ENCODE measurements at regions of chr11 and their contacts with region 1.

Region 1: DNA sequence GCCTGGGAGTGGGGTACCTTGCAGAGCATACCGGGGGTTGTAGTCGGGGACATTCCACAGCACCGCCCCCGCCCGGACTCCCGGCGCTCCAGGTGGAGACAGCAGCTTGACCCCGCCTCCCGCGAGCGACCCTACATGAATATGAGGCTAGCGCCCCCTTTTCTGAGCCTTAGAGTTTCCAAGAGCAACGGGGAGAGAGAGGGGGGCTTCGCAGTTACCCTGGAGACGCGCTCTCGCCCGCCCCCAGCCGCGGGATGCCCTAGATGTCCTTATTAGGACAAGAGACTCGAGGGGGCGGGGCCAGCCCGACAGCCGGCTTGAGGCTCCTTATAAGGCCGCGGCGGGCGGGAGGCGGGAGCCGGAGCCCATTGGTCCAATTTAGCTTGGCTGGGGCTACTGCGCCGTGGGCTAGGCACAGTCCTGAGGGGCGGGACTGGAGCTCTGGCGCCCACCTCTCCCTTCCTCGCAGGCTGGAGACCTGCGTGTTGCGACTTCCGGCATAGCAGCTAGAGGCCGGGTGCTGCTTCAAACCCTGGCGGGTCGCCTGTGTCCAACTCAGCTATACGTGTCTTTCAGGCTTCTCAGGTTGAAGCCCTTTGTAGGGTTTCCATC is 927 bp upstream of the MUS81 start:
- DNase-seq: peak; percentile 97
- H3K4me3 Mint-ChIP-seq: peak overlapping the region; percentile 96
- H3K27ac Mint-ChIP-seq: peak overlapping the region; percentile 99
- H3K4me1 Mint-ChIP-seq: peaks cover 49% of the 10 kb centered on the region
- H3K27me3 Mint-ChIP-seq: no peaks in the 10 kb centered on the region

Region 2: DNA sequence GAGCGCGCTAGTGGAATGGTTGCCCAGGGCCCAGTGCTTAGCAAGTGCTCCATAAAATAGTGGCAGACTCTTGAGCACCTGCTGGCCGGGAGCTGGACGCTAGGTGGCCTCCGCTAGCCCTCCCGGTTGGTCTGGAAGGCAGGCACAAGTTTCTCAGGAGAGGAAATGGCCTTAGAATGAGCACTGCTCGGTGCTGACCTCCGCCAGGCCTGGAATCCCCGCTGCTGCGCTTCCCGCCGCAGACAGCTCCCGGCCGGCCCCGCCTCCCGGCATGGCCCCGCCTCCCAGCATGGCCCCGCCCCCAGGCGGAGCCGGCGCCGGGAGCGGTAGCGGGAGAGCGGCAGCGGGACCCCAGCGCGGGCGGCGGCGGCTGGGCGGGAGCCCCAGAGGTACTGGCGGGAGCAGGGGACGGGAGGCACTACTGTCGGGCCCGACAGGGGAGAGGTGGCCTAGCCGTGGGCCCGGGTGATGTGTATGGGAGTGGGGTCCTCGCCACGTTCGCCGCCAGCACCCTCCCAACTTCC is 221.4 kb before region 1 on chr11 and contains the start of gene SIPA1:
- intact Hi-C with region 1: loop called (anchors 2 kb)
- DNase-seq: peak; percentile 74
- H3K4me3 Mint-ChIP-seq: peak within 1 kb of the TSS; percentile 82
- H3K27ac Mint-ChIP-seq: peak within 1 kb of the TSS; percentile 83
- H3K4me1 Mint-ChIP-seq: peaks cover 40% of the 10 kb centered on the region
- H3K27me3 Mint-ChIP-seq: no peaks in the 10 kb centered on the region
- total RNA-seq, gene SIPA1: 117 and 130 TPM in 2 replicates

Region 3: DNA sequence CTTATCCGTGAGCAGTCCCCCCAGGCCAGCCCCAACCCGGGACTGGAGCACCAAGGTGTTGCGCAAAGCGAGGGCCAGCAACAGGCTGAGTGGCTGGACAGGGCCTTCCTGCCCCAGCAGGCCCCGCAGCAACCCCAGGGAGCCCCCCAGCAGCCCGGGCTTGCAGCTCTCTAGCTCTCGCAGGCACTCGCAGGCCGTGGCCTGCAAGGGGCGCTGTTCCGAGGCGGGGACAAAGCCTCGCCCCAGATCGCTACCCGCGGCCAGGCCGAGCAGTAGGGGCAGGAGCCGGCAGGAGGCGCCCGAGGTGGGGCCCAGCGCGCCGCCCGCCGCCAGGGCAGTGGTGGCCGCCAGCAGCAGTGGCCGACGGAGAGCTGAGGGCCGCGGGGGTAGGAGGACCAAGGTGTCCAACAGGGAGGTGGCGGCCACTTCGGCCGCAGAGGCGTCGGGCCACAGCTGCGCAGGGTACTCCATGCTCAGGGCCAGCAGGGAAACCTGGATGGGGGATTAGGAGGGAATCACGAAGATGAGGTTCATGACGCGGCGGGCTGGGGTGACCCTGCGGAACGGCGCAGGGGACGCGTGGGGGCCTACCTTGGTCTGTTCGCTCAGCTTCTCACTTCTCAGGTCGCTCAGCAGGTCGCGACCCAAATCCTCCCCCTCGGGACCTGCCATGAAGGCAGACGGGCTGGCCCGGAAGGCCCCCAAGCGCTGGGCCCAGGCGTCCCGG is 79.3 kb before region 1 on chr11:
- intact Hi-C with region 1: loop called (anchors 1 kb)
- DNase-seq: peak; percentile 78
- H3K4me3 Mint-ChIP-seq: peak overlapping the region; percentile 88
- H3K27ac Mint-ChIP-seq: peak overlapping the region; percentile 91
- H3K4me1 Mint-ChIP-seq: peaks cover 27% of the 10 kb centered on the region
- H3K27me3 Mint-ChIP-seq: peaks cover 20% of the 10 kb centered on the region

Region 4: GRCh38 chr11:65791691-65792213 is 67.6 kb before region 1 on chr11:
- intact Hi-C with region 1: no loop called
- DNase-seq: peak; percentile 56
- H3K4me3 Mint-ChIP-seq: no peak overlapping the region
- H3K27ac Mint-ChIP-seq: peak overlapping the region; percentile 29
- H3K4me1 Mint-ChIP-seq: peaks cover 17% of the 10 kb centered on the region
- H3K27me3 Mint-ChIP-seq: peaks cover 24% of the 10 kb centered on the region

Region 5: GRCh38 chr11:65888163-65888814 is 29.0 kb after region 1 on chr11 and contains the start of gene FIBP:
- intact Hi-C with region 1: loop called (anchors 1 kb)
- DNase-seq: peak; percentile 90
- H3K4me3 Mint-ChIP-seq: peak within 1 kb of the TSS; percentile 99
- H3K27ac Mint-ChIP-seq: peak within 1 kb of the TSS; percentile 96
- H3K4me1 Mint-ChIP-seq: peaks cover 58% of the 10 kb centered on the region
- H3K27me3 Mint-ChIP-seq: no peaks in the 10 kb centered on the region
- total RNA-seq, gene FIBP: 86.8 and 93.2 TPM in 2 replicates

Region 6: GRCh38 chr11:65988791-65989592 is 129.7 kb after region 1 on chr11:
- intact Hi-C with region 1: loop called (anchors 1 kb)
- DNase-seq: peak; percentile 88
- H3K4me3 Mint-ChIP-seq: no peak overlapping the region
- H3K27ac Mint-ChIP-seq: peak overlapping the region; percentile 79
- H3K4me1 Mint-ChIP-seq: peaks cover 8% of the 10 kb centered on the region
- H3K27me3 Mint-ChIP-seq: no peaks in the 10 kb centered on the region

Region 7: DNA sequence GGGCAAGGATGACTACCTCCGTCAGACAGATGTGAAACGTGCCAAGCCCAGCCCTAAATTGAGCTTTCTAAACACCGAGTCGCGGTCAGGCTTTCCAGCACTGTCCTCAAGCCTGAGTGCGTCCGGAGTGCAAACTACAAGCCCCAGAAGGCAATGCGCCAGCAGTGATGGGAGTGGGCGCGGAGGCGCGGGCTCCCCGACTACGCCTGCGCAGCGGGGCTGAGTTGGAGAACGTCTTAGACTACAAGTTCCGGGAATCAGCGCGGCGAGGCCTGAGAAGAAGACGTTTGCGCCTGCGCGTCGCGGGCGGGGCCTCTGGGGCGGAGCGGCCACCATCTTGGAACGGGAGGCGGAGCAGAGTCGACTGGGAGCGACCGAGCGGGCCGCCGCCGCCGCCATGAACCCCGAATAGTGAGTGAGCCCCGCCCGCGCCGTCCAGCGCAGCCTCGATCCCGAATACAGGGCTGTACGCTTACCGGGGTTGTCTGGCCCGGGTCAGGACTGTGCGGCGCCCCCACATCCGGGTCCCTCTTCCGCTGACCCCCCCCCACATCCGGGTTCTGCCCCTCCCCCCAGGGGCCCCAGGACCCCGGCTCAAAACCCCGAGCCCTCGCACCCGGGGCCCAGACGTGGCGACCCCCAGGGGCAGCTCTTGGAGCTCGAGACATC is 409.1 kb after region 1 on chr11 and contains the start of gene RAB1B:
- intact Hi-C with region 1: loop called (anchors 1 kb)
- DNase-seq: peak; percentile 100
- H3K4me3 Mint-ChIP-seq: peak within 1 kb of the TSS; percentile 90
- H3K27ac Mint-ChIP-seq: peak within 1 kb of the TSS; percentile 90
- H3K4me1 Mint-ChIP-seq: peaks cover 35% of the 10 kb centered on the region
- H3K27me3 Mint-ChIP-seq: peaks cover 2% of the 10 kb centered on the region
- total RNA-seq, gene RAB1B: 123 and 124 TPM in 2 replicates